ENCODE measurements at regions of chr9 and their contacts with region 1.

Region 1: DNA sequence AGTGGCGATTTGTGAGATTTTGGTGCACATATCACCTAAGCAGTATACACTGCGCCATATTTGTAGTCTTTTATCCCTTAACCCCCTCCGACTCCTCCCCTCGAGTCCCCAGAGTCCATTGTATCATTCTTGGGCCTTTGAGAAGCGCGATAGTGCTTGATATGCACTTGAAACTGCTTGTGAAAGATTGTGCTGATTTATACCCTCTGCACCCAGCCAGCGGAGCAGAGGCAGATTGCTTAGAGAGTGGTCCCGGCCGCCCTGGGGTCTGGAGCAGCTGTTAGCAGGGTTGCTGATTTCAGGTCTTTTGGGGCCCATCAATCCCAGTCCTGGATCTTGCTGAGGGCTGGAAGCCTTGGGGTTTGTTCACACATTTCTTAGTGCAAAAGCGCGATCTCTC is 13.0 kb upstream of the FAM240B start:
- DNase-seq: no peak
- CTCF ChIP-seq: no peak

Region 2: GRCh38 chr9:38662763-38663593 is 69.9 kb before region 1 on chr9:
- CTCF ChIA-PET with region 1: no interaction called
- POLR2A ChIA-PET with region 1: no interaction called
- DNase-seq: no peak
- CTCF ChIP-seq: peak; percentile 4

Region 3: GRCh38 chr9:38694676-38695075 is 38.2 kb before region 1 on chr9:
- CTCF ChIA-PET with region 1: no interaction called
- POLR2A ChIA-PET with region 1: no interaction called
- DNase-seq: no peak
- CTCF ChIP-seq: no peak

Region 4: DNA sequence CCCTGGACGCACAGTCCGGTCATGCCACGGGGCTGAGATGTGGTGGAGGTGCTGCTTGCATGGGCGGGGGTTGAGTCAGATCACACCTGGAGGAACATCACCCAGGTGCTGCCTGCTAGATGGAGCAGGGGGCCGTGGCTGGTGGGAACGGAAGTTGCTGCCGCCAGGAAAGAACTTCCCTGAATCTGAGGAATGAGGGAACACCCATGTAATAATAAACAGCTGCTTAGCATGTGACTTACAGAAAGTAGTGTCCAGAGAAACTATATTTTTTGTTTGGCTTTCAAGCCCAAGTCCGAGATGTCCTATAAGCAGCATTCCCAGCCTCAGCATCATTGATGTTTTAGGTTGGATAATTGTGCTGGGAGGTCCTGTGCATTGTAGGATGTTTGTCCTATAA is 14.2 kb after region 1 on chr9:
- CTCF ChIA-PET with region 1: interaction called, 12 read pairs
- POLR2A ChIA-PET with region 1: interaction called, 3 read pairs
- DNase-seq: no peak
- CTCF ChIP-seq: no peak

Measured in GM10248 (cell line).